ENCODE measurements at regions of chr5 and their contacts with region 1.

Region 1: DNA sequence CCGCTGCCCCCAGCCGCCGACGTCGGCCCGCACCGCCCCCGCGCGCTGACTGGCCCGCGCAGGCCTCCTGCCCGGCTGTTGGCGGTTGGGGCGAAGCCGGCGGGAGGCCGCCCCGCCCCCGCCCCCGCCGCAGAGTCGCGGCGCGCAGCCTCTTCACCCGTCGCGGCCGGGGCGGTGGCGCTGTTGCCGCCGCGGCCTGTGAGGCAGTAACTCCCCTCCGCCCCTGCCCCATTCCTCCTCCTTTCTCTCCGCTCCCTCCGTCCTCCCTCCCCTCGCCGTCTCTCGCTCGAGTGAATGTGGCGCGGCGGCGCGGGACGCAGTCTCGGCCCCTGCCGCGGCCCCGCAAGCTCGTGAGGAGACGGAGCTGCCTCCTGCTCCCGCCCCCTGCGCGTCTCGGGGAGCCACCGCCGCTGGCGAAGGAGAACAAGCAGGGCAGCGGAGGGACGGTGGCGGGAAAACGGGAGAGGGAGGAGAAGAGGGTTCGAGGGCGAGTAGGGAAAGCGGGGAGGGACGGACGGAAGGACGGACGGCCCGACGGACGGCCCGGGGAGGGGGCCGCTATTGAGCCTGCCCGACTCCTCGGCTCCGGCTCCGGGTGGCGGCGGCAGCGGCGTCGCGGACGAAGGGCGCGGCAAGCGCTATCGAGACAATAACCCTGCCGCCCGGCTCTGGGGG is 637 bp upstream of the ERBIN start:
- DNase-seq: peak; percentile 68 to 91
- H3K4me3 ChIP-seq: peak overlapping the region; percentile 96 to 97
- H3K27ac ChIP-seq: peak overlapping the region; percentile 100
- H3K4me1 ChIP-seq: peaks cover 0 to 17% (median 4%) of the 10 kb centered on the region in 4 donors
- H3K27me3 ChIP-seq: no peaks in the 10 kb centered on the region
- CTCF ChIP-seq: peak; percentile 33 to 35

Region 2: DNA sequence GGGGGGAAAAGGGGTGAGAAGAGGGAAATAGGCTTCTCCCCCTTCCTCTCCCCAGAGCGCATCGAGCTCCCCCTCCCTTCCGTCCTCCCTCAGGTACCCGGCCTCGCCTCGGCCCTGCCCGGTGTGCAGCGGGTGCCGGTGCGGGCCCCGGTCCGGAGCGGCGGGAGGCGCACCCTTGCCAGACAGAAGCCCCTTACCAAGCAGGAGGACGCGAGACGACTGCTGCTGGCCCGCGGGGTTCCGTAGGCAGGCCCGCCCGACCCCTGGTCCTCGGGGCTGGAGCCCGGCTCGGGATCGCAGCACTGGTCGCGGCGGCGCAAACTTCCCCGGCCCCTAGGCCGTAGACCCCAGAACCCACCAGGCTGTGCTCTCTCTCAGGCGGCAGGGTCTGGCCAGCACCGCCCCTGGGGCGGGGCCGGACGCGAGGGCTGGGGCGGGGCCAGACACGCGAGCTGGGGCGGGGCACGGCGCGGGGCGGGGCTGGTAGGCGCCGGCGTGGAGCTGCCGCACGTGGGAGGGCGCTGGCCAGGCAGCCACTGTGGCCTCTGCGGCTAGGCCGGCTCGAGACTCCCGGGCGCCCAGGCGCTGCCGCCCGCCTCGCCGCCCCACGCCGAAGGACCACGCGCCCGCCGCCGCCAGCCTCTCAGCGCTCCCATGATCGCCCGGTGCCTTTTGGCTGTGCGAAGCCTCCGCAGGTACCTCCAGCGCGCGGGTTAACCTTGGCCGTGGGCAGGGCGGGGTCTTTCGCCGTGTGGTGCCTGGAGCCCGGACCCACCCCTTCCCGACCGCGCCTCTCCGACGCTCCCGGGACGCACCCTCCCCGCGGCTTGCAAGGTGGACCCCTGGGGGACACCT is 203.8 kb before region 1 on chr5 and contains the starts of genes NLN and SGTB:
- intact Hi-C with region 1: loop called (anchors 10 kb)
- DNase-seq: peak; percentile 72 to 91
- H3K4me3 ChIP-seq: peak within 1 kb of the TSS; percentile 73 to 92
- H3K27ac ChIP-seq: peak within 1 kb of the TSS; percentile 76 to 82
- H3K4me1 ChIP-seq: peaks cover 0 to 37% (median 7%) of the 10 kb centered on the region in 4 donors
- H3K27me3 ChIP-seq: no peaks in the 10 kb centered on the region
- CTCF ChIP-seq: no peak

Region 3: DNA sequence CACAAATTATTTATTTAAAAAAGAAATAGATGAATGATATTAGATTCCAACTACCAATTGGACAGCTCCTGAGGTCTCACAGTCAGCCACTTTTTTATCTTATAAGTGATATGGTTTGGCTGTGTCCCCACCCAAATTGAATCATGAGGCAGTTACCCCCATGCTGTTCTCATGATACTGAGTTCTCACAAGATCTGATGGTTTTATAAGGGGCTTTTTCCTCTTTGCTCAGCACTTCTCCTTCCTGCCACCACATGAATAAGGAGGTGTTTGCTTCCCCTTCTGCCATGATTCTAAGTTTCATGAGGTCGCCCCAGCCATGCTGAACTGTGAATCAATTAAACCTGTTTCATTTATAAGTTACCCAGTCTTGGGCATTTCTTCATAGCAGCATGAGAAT is 190.8 kb before region 1 on chr5:
- intact Hi-C with region 1: no loop called
- DNase-seq: no peak
- H3K4me3 ChIP-seq: no peak overlapping the region
- H3K27ac ChIP-seq: no peak overlapping the region
- H3K4me1 ChIP-seq: no peaks in the 10 kb centered on the region
- H3K27me3 ChIP-seq: no peaks in the 10 kb centered on the region
- CTCF ChIP-seq: no peak

Region 4: DNA sequence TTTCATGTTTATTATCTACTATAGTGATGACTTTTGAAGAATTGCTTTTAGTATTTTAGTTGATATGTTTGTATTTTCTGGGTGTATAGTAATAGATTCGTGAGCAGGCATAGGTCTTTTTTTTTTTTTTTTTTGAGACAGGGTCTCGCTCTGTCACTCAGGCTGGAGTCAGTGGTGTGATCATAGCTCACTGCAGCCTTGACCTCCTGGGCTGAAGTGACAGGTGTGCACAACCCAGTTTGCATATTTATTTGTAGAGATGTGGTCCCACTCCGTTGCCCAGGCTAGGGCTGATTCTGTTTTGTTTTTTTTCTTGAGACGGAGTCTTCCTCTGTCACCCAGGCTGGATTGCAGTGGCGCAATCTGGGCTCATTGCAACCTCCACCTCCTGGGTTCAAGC is 12.5 kb after region 1 on chr5:
- intact Hi-C with region 1: no loop called
- DNase-seq: no peak
- H3K4me3 ChIP-seq: no peak overlapping the region
- H3K27ac ChIP-seq: no peak overlapping the region
- H3K4me1 ChIP-seq: peaks cover 0 to 38% (median 6%) of the 10 kb centered on the region in 4 donors
- H3K27me3 ChIP-seq: no peaks in the 10 kb centered on the region
- CTCF ChIP-seq: no peak

Region 5: GRCh38 chr5:65967288-65968066 is 41.7 kb after region 1 on chr5:
- intact Hi-C with region 1: no loop called
- DNase-seq: no peak
- H3K4me3 ChIP-seq: no peak overlapping the region
- H3K27ac ChIP-seq: no peak overlapping the region
- H3K4me1 ChIP-seq: peaks cover 0 to 47% (median 14%) of the 10 kb centered on the region in 4 donors
- H3K27me3 ChIP-seq: no peaks in the 10 kb centered on the region
- CTCF ChIP-seq: no peak

Region 6: DNA sequence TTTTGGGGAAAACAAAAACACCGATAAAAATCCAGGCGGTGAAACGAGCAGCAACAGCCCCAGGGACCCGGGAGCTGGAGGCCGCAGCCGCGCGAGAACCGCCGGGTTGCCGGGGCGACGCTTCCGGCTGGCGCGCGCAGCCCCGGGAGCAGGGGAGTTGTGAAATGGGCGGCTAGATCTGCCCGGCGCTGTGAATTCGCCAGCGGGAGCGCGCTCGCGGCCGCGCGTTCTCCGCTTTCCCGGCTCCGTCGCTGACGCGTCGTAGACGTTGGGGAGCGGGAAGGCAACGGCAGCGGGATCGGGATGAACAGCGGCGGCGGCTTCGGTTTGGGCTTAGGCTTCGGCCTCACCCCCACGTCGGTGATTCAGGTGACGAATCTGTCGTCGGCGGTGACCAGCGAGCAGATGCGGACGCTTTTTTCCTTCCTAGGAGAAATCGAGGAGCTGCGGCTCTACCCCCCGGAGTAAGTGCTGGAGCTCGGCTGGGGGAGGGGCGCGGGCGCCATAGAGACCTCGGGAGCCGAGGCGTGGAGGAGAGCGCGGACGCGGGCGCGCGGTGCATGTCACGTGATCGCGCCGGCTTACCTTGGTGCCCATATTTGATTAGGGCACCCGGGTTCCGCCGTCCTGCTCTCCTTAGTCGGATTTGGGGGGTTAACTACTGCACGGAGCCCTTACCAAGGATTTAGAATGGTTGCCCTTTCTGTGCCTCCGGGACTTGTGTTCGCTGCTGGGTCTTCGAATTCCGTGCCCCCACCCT is 218.5 kb after region 1 on chr5 and contains the start of gene SREK1:
- intact Hi-C with region 1: loop called (anchors 2 kb)
- DNase-seq: peak; percentile 92 to 95
- H3K4me3 ChIP-seq: peak within 1 kb of the TSS; percentile 77 to 90
- H3K27ac ChIP-seq: peak within 1 kb of the TSS; percentile 97 to 98
- H3K4me1 ChIP-seq: peaks cover 0 to 39% (median 22%) of the 10 kb centered on the region in 4 donors
- H3K27me3 ChIP-seq: no peaks in the 10 kb centered on the region
- CTCF ChIP-seq: peak in 1 of 2 experiments; percentile 15

Region 7: DNA sequence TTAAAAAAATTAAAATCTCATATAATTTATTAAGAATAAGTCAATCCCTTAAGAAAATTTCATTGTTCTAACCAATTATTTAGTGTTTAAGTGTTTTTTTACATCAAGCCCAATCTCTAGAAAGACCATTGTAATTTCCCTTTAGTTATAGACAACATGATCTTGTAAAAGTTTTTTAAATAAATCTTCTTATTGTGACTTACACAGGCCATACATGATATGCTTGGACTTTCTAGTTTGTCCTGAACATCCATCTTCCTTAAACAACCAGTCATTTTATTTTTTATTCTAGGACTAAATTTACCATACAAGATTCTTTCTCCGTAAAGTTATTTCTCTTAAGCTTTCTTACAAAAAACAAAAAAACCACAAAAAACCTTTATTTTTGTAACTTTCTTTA is 543.9 kb after region 1 on chr5:
- intact Hi-C with region 1: no loop called
- DNase-seq: no peak
- H3K4me3 ChIP-seq: no peak overlapping the region
- H3K27ac ChIP-seq: no peak overlapping the region
- H3K4me1 ChIP-seq: no peaks in the 10 kb centered on the region
- H3K27me3 ChIP-seq: no peaks in the 10 kb centered on the region
- CTCF ChIP-seq: no peak

Measured in tibial artery (tissue), 4 donors.